CD8-positive, alpha-beta T cell (primary cell): ENCODE measurements at regions of chr14 and their contacts with region 1.

Region 1: DNA sequence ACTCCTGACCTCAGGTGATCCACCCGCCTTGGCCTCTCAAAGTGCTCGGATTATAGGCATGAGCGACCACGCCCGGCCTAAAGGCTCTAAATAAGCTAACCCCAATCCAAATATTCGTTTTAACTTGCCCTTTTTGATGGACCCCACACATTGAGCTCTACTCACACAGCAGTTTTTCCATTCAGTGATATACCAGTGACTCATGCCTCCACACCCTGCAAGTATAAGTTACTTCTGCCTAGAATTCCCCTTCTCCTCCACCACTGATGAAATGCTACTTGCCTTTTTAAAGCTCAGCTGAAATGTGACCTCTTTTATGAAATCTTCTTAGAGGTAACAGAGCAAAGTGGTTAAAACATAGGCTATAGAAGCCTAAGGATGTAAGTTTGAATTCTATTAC is 68.8 kb downstream of the EXOC5 start:
- DNase-seq: no peak
- ATAC-seq: no peak
- H3K4me3 ChIP-seq: no peak overlapping the region
- H3K4me3 Mint-ChIP-seq: no peak overlapping the region
- H3K27ac ChIP-seq: no peak overlapping the region
- H3K27ac Mint-ChIP-seq: no peak overlapping the region
- H3K4me1 ChIP-seq: no peaks in the 10 kb centered on the region
- H3K4me1 Mint-ChIP-seq: no peaks in the 10 kb centered on the region
- H3K27me3 ChIP-seq: no peaks in the 10 kb centered on the region
- H3K27me3 Mint-ChIP-seq: peaks cover 5% of the 10 kb centered on the region
- CTCF ChIP-seq: no peak

Region 2: GRCh38 chr14:56555921-56556570 is 643.9 kb before region 1 on chr14:
- CTCF ChIA-PET with region 1: no interaction called
- POLR2A ChIA-PET with region 1: no interaction called
- intact Hi-C with region 1: loop called (anchors 2 to 5 kb)
- DNase-seq: peak in 2 of 9 experiments; percentile 16 to 29
- ATAC-seq: no peak
- H3K4me3 ChIP-seq: no peak overlapping the region
- H3K4me3 Mint-ChIP-seq: no peak overlapping the region
- H3K27ac ChIP-seq: no peak overlapping the region
- H3K27ac Mint-ChIP-seq: no peak overlapping the region
- H3K4me1 ChIP-seq: no peaks in the 10 kb centered on the region
- H3K4me1 Mint-ChIP-seq: no peaks in the 10 kb centered on the region
- H3K27me3 ChIP-seq: peaks cover 0 to 1% of the 10 kb centered on the region in 2 experiments
- H3K27me3 Mint-ChIP-seq: peaks cover 41% of the 10 kb centered on the region
- CTCF ChIP-seq: peak; percentile 25

Region 3: DNA sequence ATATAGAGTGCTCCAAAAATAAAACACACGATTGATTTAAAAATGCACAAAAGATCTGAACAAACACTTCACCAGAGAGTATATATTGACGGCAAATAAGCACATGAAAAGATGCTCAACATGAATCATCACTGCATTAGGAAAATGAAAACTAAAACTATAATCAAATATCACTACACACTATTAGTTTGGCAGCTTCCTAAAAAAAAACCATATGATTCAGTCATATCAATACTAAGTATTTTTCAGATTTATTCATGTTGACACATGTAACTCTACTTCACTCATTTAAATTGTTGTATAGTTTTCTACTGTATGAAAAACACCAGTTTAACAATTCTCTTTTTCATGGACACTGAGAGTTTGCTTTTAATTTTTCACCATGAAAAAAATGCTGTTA is 27.2 kb after region 1 on chr14:
- CTCF ChIA-PET with region 1: no interaction called
- POLR2A ChIA-PET with region 1: no interaction called
- intact Hi-C with region 1: no loop called
- DNase-seq: no peak
- ATAC-seq: no peak
- H3K4me3 ChIP-seq: no peak overlapping the region
- H3K4me3 Mint-ChIP-seq: no peak overlapping the region
- H3K27ac ChIP-seq: no peak overlapping the region
- H3K27ac Mint-ChIP-seq: peak overlapping the region; percentile 32
- H3K4me1 ChIP-seq: no peaks in the 10 kb centered on the region
- H3K4me1 Mint-ChIP-seq: no peaks in the 10 kb centered on the region
- H3K27me3 ChIP-seq: no peaks in the 10 kb centered on the region
- H3K27me3 Mint-ChIP-seq: no peaks in the 10 kb centered on the region
- CTCF ChIP-seq: no peak